ENCODE measurements at regions of chr2 and their contacts with region 1.

Region 1: GRCh38 chr2:101205521-101205998 is 47.1 kb upstream of the CNOT11 start:
- DNase-seq: peak; percentile 18
- H3K4me3 Mint-ChIP-seq: peak overlapping the region; percentile 53
- H3K27ac Mint-ChIP-seq: no peak overlapping the region
- H3K4me1 Mint-ChIP-seq: peaks cover 14% of the 10 kb centered on the region
- H3K27me3 Mint-ChIP-seq: peaks cover 2% of the 10 kb centered on the region

Region 2: DNA sequence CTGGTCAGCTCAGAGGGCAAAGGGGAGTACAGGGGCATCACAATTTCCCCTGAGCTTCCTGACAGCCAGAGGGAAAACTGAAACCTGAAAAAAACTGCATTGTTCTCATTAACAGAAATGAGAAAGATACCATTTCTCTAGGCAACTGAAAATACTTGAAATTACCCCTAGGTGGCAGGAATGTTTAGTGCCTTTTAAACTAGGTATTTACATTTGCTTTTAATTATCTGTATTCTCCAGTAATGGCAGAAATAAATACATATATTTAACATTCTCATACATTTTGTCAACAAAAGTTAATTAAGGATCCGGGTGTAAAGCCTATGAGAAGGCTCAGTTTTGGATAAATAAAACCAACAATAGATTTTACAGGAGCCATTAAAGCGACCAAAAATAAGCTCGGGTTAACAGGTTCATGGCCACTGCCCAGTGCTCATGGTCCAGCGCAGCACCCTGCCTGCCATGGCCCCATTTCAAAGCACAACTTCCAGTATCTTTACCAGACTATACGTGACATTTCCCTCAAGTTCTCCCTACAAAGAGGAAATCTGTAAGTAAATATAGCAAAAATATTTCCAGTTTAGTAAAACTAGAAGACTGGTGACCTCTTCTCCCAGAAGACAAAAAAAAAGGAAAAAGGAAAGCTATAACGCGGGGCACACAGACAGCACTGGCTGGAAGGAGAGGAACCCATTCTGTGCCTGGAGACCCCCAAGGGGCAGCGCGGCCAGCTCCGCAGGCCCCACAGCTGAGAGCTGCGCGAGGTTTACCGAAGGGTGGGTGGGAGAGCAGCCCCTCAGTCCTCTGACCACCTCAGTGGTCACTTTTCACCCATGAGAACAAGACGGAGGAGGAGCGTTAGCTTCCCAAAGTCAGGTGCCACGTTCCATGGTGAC is 168.8 kb before region 1 on chr2:
- intact Hi-C with region 1: loop called (anchors 1 kb)
- DNase-seq: no peak
- H3K4me3 Mint-ChIP-seq: no peak overlapping the region
- H3K27ac Mint-ChIP-seq: no peak overlapping the region
- H3K4me1 Mint-ChIP-seq: no peaks in the 10 kb centered on the region
- H3K27me3 Mint-ChIP-seq: no peaks in the 10 kb centered on the region

Region 3: GRCh38 chr2:101151141-101151858 is 54.3 kb before region 1 on chr2 and contains the start of gene TBC1D8:
- intact Hi-C with region 1: loop called (anchors 2 kb)
- DNase-seq: peak; percentile 63
- H3K4me3 Mint-ChIP-seq: peak within 1 kb of the TSS; percentile 75
- H3K27ac Mint-ChIP-seq: no peak within 1 kb of the TSS
- H3K4me1 Mint-ChIP-seq: peaks cover 11% of the 10 kb centered on the region
- H3K27me3 Mint-ChIP-seq: peaks cover 60% of the 10 kb centered on the region
- total RNA-seq, gene TBC1D8: 0.91 and 1.1 TPM in 2 replicates

Region 4: GRCh38 chr2:101410716-101411211 is 205.2 kb after region 1 on chr2:
- intact Hi-C with region 1: no loop called
- DNase-seq: no peak
- H3K4me3 Mint-ChIP-seq: no peak overlapping the region
- H3K27ac Mint-ChIP-seq: no peak overlapping the region
- H3K4me1 Mint-ChIP-seq: no peaks in the 10 kb centered on the region
- H3K27me3 Mint-ChIP-seq: peaks cover 6% of the 10 kb centered on the region

Region 5: GRCh38 chr2:101921319-101921952 is 715.9 kb after region 1 on chr2:
- intact Hi-C with region 1: no loop called
- DNase-seq: no peak
- H3K4me3 Mint-ChIP-seq: no peak overlapping the region
- H3K27ac Mint-ChIP-seq: no peak overlapping the region
- H3K4me1 Mint-ChIP-seq: no peaks in the 10 kb centered on the region
- H3K27me3 Mint-ChIP-seq: no peaks in the 10 kb centered on the region